ENCODE measurements at regions of chr9 and their contacts with region 1.

Region 1: DNA sequence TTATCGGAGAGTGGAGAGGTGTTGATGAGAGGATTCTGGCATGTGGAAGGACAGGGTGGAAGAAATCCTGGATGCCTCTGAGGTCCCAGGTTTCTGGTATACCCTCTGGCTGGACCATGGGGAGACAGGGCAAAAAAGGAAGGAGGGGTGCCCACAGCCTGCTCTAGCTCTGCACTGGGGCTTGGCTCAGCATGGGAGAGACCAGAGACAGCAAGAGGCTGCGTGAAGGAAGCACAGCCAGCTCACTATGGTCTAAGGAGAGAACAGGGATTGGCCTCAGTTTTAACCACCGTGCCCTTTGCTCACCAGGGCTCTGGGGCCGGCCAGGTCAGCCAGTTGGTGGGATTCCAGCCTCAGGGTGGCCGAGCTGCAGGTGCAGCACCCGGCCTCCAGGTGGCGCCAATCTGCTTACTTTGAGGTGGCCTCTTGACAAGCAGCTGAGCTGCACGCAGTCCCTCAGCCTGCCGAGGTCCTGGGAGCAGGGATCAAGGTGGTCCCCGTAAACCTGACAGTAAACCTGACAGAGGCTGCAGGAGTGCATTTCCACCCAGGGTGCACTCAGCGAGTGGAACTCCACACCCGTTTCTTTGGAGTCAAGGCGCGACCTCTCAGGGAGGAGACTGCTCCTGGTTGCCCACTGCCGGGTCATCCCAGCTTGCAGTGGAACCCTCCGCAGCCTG is 25.0 kb upstream of the SPTLC1 start:
- DNase-seq: peak; percentile 72
- H3K4me3 Mint-ChIP-seq: peak overlapping the region; percentile 35
- H3K27ac Mint-ChIP-seq: no peak overlapping the region
- H3K4me1 Mint-ChIP-seq: peaks cover 15% of the 10 kb centered on the region
- H3K27me3 Mint-ChIP-seq: no peaks in the 10 kb centered on the region
- CTCF ChIP-seq: peak; percentile 91

Region 2: GRCh38 chr9:92191801-92192200 is 51.6 kb after region 1 on chr9:
- CTCF ChIA-PET with region 1: interaction called, 19 read pairs
- POLR2A ChIA-PET with region 1: no interaction called
- intact Hi-C with region 1: no loop called
- DNase-seq: peak; percentile 33
- H3K4me3 Mint-ChIP-seq: no peak overlapping the region
- H3K27ac Mint-ChIP-seq: no peak overlapping the region
- H3K4me1 Mint-ChIP-seq: peaks cover 6% of the 10 kb centered on the region
- H3K27me3 Mint-ChIP-seq: no peaks in the 10 kb centered on the region
- CTCF ChIP-seq: no peak

Region 3: GRCh38 chr9:92232190-92232589 is 92.0 kb after region 1 on chr9:
- CTCF ChIA-PET with region 1: interaction called, 153 read pairs
- POLR2A ChIA-PET with region 1: interaction called, 4 read pairs
- intact Hi-C with region 1: no loop called
- DNase-seq: no peak
- H3K4me3 Mint-ChIP-seq: no peak overlapping the region
- H3K27ac Mint-ChIP-seq: no peak overlapping the region
- H3K4me1 Mint-ChIP-seq: no peaks in the 10 kb centered on the region
- H3K27me3 Mint-ChIP-seq: no peaks in the 10 kb centered on the region
- CTCF ChIP-seq: no peak

Region 4: DNA sequence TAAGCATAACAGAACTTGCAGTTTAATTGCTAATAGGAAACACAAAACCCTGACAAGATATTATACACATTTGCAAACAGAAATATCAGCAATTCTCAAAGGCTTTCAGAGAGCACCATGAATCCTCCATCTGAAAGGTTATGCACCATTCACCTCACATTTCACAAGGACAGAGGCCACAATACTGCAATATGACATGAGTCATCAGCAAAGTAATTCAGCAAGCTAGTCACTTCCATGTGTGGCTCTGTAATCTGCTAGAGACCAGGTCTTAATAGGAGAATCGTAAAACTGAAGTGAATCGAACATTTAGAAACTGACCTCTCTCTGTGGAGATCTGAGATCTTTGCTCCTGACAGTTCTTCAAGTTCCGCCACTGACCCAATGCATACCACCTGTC is 124.9 kb after region 1 on chr9:
- CTCF ChIA-PET with region 1: interaction called, 41 read pairs
- POLR2A ChIA-PET with region 1: no interaction called
- intact Hi-C with region 1: no loop called
- DNase-seq: peak; percentile 53
- H3K4me3 Mint-ChIP-seq: no peak overlapping the region
- H3K27ac Mint-ChIP-seq: no peak overlapping the region
- H3K4me1 Mint-ChIP-seq: no peaks in the 10 kb centered on the region
- H3K27me3 Mint-ChIP-seq: no peaks in the 10 kb centered on the region
- CTCF ChIP-seq: no peak

Region 5: GRCh38 chr9:92325269-92325990 is 185.2 kb after region 1 on chr9 and contains the starts of genes CENPP and NOL8:
- CTCF ChIA-PET with region 1: interaction called, 4 read pairs
- POLR2A ChIA-PET with region 1: no interaction called
- intact Hi-C with region 1: loop called (anchors 1 kb)
- DNase-seq: peak; percentile 92
- H3K4me3 Mint-ChIP-seq: peak within 1 kb of the TSS; percentile 97
- H3K27ac Mint-ChIP-seq: peak within 1 kb of the TSS; percentile 98
- H3K4me1 Mint-ChIP-seq: peaks cover 26% of the 10 kb centered on the region
- H3K27me3 Mint-ChIP-seq: no peaks in the 10 kb centered on the region
- CTCF ChIP-seq: no peak
- total RNA-seq, gene CENPP: 1.5 and 4.2 TPM in 2 replicates
- total RNA-seq, gene NOL8: 38.7 and 41.8 TPM in 2 replicates